ENCODE measurements at regions of chr10 and their contacts with region 1.

Region 1: DNA sequence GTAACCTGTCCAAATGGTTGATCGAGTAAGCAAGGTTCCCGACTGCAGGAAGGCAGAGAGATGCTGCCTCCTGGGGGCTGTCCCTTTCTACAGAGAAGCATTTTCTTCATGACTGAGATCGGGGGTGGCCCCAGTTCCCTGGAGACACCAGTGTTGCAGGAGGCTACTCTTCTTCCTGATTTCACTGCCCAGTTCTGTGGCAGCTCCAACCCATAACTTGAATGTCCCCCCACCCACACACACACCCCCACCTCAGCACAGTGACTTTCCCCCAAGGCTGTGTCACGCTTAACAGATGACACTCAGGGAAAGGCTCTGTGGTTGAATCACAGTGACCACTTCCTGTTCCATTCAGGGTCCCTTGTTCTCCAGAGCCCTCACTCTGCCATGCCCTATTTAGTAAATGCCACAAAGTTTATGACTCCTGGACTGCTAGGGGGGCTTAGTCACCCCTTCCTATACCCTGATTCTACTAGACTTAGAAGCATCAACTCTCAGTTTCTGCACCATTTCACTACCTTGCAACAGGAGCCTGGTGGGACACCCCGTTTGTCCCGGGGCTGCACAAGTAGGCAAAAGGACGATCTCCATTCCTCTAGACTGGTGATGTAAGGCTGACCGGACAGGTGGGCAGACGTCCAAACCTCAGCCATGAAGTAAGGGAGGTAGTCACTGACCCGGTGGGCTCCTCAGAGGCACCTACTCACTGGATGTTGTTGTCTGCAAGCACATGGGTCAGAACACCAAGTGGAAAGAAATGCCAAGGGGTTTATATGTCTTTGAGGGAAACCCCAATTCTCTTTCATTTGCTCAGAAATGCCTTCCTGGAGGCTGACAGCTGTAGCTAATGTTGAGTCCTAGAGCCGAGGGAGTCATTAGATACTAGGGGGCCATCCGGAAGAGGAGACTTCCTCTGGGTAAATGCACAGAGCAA is 31.3 kb upstream of the SMC3 start:
- DNase-seq: peak; percentile 79
- ATAC-seq: peak; percentile 80
- H3K4me3 ChIP-seq: no peak overlapping the region
- H3K4me3 Mint-ChIP-seq: peak overlapping the region; percentile 28
- H3K27ac ChIP-seq: no peak overlapping the region
- H3K27ac Mint-ChIP-seq: peak overlapping the region; percentile 46
- H3K4me1 ChIP-seq: peaks cover 21 to 23% of the 10 kb centered on the region in 2 donors
- H3K4me1 Mint-ChIP-seq: peaks cover 24% of the 10 kb centered on the region
- H3K27me3 ChIP-seq: peaks cover 0 to 2% (median 0%) of the 10 kb centered on the region in 4 experiments
- H3K27me3 Mint-ChIP-seq: peaks cover 4% of the 10 kb centered on the region
- CTCF ChIP-seq: peak; percentile 40

Region 2: DNA sequence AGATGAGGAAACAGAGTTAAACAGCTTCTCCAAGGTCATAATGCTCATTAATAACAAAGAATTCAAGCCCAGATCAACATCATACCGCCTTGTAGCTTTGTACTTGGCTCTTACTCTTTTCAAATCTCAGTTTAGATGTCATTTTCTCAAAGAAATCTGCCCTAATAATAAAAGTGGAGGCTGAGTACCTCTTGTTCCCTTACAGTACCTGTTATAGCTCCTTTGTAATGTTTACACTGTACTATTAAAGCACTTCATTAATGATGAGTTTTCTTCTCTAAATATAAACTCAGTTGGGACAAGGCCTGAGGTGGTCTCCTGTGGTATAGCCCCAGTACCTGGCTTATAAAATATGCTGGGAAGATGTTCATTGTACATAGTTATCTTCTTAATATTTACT is 239.3 kb before region 1 on chr10:
- CTCF ChIA-PET with region 1: no interaction called
- POLR2A ChIA-PET with region 1: no interaction called
- intact Hi-C with region 1: no loop called
- DNase-seq: no peak
- ATAC-seq: no peak
- H3K4me3 ChIP-seq: no peak overlapping the region
- H3K4me3 Mint-ChIP-seq: no peak overlapping the region
- H3K27ac ChIP-seq: no peak overlapping the region
- H3K27ac Mint-ChIP-seq: no peak overlapping the region
- H3K4me1 ChIP-seq: peaks cover 0 to 2% of the 10 kb centered on the region in 2 donors
- H3K4me1 Mint-ChIP-seq: peaks cover 15% of the 10 kb centered on the region
- H3K27me3 ChIP-seq: no peaks in the 10 kb centered on the region
- H3K27me3 Mint-ChIP-seq: no peaks in the 10 kb centered on the region
- CTCF ChIP-seq: no peak

Region 3: GRCh38 chr10:110460111-110460809 is 76.0 kb before region 1 on chr10:
- CTCF ChIA-PET with region 1: no interaction called
- POLR2A ChIA-PET with region 1: interaction called, 3 read pairs
- intact Hi-C with region 1: loop called (anchors 2 kb)
- DNase-seq: peak; percentile 53
- ATAC-seq: peak; percentile 68
- H3K4me3 ChIP-seq: no peak overlapping the region
- H3K4me3 Mint-ChIP-seq: peak overlapping the region; percentile 65
- H3K27ac ChIP-seq: peak overlapping the region in 1 of 2 donors; percentile 45
- H3K27ac Mint-ChIP-seq: peak overlapping the region; percentile 86
- H3K4me1 ChIP-seq: peaks cover 72 to 74% of the 10 kb centered on the region in 2 donors
- H3K4me1 Mint-ChIP-seq: peaks cover 73% of the 10 kb centered on the region
- H3K27me3 ChIP-seq: no peaks in the 10 kb centered on the region
- H3K27me3 Mint-ChIP-seq: peaks cover 8% of the 10 kb centered on the region
- CTCF ChIP-seq: no peak

Region 4: DNA sequence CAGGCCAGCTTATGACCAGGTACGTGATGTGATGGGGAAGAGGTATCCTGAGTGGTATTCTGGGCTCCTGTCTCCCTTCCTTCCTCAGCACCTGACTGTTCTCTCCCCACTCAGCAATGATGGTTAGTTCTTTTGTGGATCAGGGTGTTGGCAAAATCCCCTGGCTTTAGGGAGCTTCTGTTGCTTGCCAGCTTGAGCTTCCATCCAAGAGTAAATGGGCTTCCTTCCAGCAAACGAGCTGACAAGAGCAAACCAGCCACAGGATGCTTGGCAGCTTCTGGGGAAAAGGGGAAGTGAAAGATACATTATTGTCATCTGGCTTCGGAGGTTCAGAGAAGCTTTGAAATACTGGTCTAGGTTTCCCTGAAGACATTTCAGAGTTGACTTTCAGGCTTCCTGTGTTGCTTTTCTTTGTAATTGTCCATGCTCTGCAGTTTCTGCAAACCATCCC is 33.3 kb before region 1 on chr10:
- CTCF ChIA-PET with region 1: interaction called, 6 read pairs
- POLR2A ChIA-PET with region 1: no interaction called
- intact Hi-C with region 1: loop called (anchors 1 kb)
- DNase-seq: peak; percentile 87
- ATAC-seq: peak; percentile 51
- H3K4me3 ChIP-seq: peak overlapping the region in 1 of 5 experiments; percentile 45
- H3K4me3 Mint-ChIP-seq: peak overlapping the region; percentile 85
- H3K27ac ChIP-seq: peak overlapping the region; percentile 82 to 87
- H3K27ac Mint-ChIP-seq: peak overlapping the region; percentile 90
- H3K4me1 ChIP-seq: peaks cover 54 to 63% of the 10 kb centered on the region in 2 donors
- H3K4me1 Mint-ChIP-seq: peaks cover 67% of the 10 kb centered on the region
- H3K27me3 ChIP-seq: peaks cover 0 to 11% (median 2%) of the 10 kb centered on the region in 4 experiments
- H3K27me3 Mint-ChIP-seq: peaks cover 6% of the 10 kb centered on the region
- CTCF ChIP-seq: no peak